ENCODE measurements at regions of chr19 and their contacts with region 1.

Region 1: DNA sequence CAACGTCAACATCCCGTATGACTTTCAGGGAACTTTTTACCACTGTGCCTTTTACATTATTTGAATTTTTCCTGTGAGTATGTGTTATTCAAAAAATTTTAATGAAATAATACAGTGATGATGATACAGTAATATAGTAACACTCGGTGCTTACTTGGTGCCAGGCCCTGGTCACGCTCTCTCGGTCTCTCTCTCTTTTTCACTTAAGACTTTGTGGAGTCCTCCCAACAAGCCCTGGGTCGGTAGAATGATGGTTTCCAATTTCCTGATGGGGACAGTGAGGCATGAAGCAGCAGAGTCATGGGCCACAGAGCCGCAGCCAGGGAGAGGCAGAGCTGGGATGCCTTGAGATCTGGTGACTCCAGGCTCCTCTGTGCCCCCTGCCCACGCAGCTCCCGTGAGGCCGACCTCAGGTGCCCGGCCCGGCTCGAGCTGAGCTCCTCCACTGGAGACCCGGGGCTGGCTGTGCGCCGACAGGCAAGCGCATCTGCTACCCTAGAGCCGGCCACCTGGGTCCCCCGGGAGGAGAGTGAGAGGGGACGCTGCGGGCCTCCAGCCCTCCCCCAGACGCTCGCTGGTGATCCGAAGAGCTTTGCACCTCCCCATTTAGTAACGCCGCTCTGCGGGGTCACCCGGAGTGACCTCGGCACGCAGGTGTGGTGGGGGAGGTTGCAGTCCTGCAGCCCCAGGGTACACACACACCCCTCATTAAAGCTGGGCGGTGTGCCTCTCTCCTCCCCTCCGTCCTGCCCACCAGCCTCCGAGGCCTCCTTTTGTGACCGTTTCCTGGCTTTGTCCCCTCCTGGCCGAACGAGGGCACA is 4.4 kb upstream of the SBK3 start:
- DNase-seq: no peak
- ATAC-seq: peak in 2 of 8 donors; percentile 22 to 23
- H3K4me3 ChIP-seq: peak overlapping the region in 7 of 10 donors; percentile 24 to 51 (median 42)
- H3K27ac ChIP-seq: peak overlapping the region in 9 of 10 donors; percentile 62 to 77 (median 69)
- H3K4me1 ChIP-seq: peaks cover 17 to 52% (median 40%) of the 10 kb centered on the region in 9 donors
- H3K27me3 ChIP-seq: peaks cover 0 to 7% (median 0%) of the 10 kb centered on the region in 7 donors
- CTCF ChIP-seq: peak in 3 of 9 donors; percentile 6 to 30 (median 27)

Region 2: DNA sequence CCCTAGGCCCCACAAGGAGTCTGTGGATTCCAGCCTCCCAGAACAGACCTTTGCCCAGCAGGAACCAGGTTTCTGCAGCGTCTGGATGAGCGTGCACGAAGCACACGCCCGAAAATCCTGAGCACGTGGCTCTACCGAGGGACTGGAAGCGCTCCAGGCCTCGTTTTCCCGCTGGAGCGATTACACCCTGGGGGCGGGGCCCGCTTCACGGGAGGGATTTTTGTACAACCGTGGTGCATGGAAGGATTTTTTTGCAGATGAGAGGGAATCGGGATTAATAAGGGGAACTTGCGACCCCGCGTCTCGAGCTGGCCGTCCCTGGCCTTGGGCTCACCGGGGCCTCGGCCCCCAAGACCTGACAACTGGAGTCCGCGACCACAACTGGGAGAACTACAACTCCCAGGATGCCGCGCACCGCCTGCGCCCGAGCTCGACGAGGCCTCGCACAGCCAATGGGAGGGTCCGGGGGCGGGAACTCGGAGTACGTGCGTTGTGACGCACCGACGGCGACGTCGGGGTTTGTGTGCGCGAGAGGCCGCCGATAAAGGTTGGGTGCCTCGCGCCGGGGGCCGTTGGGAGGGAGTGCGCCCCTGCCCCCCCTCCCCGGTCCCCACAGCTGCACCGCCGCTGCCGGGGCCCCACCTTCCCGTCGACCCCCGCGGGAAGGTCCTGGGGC is 73.5 kb before region 1 on chr19 and contains the start of gene ZNF628:
- intact Hi-C with region 1: no loop called
- DNase-seq: peak; percentile 99
- ATAC-seq: peak; percentile 96 to 98 (median 97)
- H3K4me3 ChIP-seq: peak within 1 kb of the TSS; percentile 39 to 71 (median 66)
- H3K27ac ChIP-seq: peak within 1 kb of the TSS; percentile 80 to 98 (median 92)
- H3K4me1 ChIP-seq: peaks cover 3 to 38% (median 19%) of the 10 kb centered on the region in 9 donors
- H3K27me3 ChIP-seq: no peaks in the 10 kb centered on the region
- CTCF ChIP-seq: no peak
- total RNA-seq, gene ZNF628: 2.5 to 7.8 (median 4.3) TPM

Region 3: GRCh38 chr19:55563261-55563690 is 13.6 kb after region 1 on chr19:
- intact Hi-C with region 1: loop called in 1 of 10 experiments (anchors 1 kb)
- DNase-seq: peak; percentile 69 to 77
- ATAC-seq: peak; percentile 88 to 96 (median 92)
- H3K4me3 ChIP-seq: peak overlapping the region in 1 of 10 donors; percentile 50
- H3K27ac ChIP-seq: peak overlapping the region; percentile 52 to 92 (median 80)
- H3K4me1 ChIP-seq: peaks cover 0 to 8% (median 0%) of the 10 kb centered on the region in 9 donors
- H3K27me3 ChIP-seq: peaks cover 0 to 5% (median 0%) of the 10 kb centered on the region in 7 donors
- CTCF ChIP-seq: no peak

Region 4: DNA sequence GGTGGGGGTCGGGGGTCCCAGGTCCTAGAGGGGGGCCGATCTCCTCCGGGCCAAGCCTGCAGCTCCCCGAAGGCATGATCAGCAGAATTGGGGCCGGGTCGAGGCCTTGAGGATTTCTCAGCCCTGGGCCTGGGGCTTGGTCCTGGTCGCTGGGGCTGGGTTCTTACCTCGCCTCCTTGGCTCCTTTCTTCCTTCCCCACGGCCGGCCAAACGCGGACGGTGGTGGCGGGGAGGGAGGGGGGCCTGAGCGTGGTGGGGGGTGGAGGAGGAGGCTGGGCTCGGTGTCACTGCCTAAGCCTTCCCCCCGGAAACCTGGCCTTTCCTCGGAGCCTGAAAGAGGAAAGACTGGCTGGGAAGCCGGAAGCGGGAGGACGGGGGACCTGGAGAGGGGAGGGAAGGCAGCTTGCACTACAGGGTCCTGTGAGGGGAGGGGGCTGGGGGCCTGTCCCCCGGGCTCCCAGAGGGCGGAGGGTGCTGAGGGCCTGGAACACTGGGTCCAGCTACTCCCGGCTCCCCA is 31.0 kb after region 1 on chr19 and contains the start of gene ZNF579:
- intact Hi-C with region 1: loop called in 3 of 10 experiments (anchors 2 to 5 kb)
- DNase-seq: peak; percentile 87 to 92
- ATAC-seq: peak; percentile 86 to 95 (median 89)
- H3K4me3 ChIP-seq: peak within 1 kb of the TSS; percentile 84 to 100 (median 94)
- H3K27ac ChIP-seq: peak within 1 kb of the TSS; percentile 94 to 99 (median 96)
- H3K4me1 ChIP-seq: peaks cover 0 to 22% (median 16%) of the 10 kb centered on the region in 9 donors
- H3K27me3 ChIP-seq: peaks cover 0 to 10% (median 0%) of the 10 kb centered on the region in 7 donors
- CTCF ChIP-seq: no peak
- total RNA-seq, gene ZNF579: 7.1 to 16.9 (median 9.6) TPM

Region 5: DNA sequence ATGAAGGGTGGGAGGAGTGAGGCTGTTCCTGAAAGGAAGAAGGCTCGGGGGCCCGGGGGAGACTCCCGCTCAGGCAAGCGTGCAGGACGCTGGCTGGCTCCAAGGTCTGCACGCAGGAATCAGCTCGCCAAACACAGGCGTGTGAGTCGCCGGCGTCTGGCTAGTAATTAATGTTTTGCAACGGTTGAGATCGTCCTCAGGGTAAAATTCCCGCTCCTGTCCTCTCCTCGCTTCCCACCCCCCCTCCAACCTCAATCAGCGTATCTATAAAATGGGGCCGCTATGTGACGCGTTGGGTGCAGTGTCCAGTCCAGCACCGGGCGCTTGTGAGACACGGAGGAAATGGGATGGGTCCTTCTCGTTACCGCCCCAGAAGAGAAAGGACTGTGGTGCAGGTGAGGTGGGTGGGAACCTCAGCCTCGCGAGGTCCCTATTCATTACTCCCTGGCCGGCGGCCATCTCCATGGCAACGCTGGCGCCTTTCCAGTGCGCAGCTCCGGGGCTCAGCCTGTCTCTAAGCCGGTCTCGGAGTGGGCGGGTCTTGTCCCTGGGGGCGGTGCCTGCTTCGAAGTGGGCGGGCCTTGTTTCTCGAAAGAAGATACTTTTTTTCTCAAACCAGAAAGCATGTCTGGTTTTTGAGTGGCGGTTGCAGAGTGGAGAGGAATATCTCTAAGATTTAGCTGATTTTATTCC is 37.4 kb after region 1 on chr19:
- intact Hi-C with region 1: loop called in 3 of 10 experiments (anchors 2 to 5 kb)
- DNase-seq: peak; percentile 96 to 97
- ATAC-seq: peak; percentile 86 to 95 (median 92)
- H3K4me3 ChIP-seq: peak overlapping the region in 9 of 10 donors; percentile 21 to 45 (median 42)
- H3K27ac ChIP-seq: peak overlapping the region in 1 of 10 donors; percentile 48
- H3K4me1 ChIP-seq: peaks cover 10 to 30% (median 25%) of the 10 kb centered on the region in 9 donors
- H3K27me3 ChIP-seq: peaks cover 0 to 24% (median 0%) of the 10 kb centered on the region in 7 donors
- CTCF ChIP-seq: no peak

Region 6: GRCh38 chr19:55599468-55600279 is 50.0 kb after region 1 on chr19 and contains the start of gene FIZ1:
- intact Hi-C with region 1: loop called in 2 of 10 experiments (anchors 1 to 5 kb)
- DNase-seq: peak; percentile 98 to 99
- ATAC-seq: peak; percentile 86 to 96 (median 94)
- H3K4me3 ChIP-seq: peak within 1 kb of the TSS; percentile 54 to 94 (median 76)
- H3K27ac ChIP-seq: peak within 1 kb of the TSS; percentile 96 to 100 (median 98)
- H3K4me1 ChIP-seq: peaks cover 4 to 31% (median 24%) of the 10 kb centered on the region in 9 donors
- H3K27me3 ChIP-seq: no peaks in the 10 kb centered on the region
- CTCF ChIP-seq: no peak
- total RNA-seq, gene FIZ1: 11.6 to 18.8 (median 13.5) TPM